ENCODE measurements at regions of chr11 and their contacts with region 1.

Region 1: DNA sequence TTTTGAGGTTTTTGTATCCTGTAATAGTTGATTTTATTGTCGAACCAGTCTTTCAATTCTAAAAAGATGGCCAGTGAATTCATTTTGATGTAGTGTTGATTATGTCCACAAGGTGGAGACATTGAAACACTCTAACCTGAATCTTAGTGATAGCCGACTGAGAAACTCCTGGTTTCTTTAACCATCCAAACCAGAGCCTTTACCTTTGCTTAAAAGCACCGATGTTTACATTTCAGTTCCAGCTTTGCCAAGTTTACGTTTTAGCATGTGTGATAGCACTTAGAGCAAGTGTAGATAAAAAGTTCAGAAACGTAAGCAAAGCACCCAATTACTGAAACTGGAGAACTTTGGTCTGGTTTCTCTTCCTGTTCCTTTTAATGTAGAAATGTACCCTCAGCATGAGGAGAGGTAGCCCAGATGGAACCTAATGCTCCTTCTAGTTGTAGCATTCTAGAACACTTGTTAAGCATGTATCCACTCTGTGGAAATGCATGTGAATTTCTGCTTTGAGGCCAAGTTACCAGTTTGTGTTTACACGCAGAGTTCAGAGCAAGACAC is 208.6 kb downstream of the DBX1 start:
- DNase-seq: no peak
- ATAC-seq: no peak
- H3K4me3 ChIP-seq: no peak overlapping the region
- H3K27ac ChIP-seq: no peak overlapping the region
- H3K4me1 ChIP-seq: peaks cover 6 to 11% of the 10 kb centered on the region in 2 donors
- H3K27me3 ChIP-seq: no peaks in the 10 kb centered on the region

Region 2: DNA sequence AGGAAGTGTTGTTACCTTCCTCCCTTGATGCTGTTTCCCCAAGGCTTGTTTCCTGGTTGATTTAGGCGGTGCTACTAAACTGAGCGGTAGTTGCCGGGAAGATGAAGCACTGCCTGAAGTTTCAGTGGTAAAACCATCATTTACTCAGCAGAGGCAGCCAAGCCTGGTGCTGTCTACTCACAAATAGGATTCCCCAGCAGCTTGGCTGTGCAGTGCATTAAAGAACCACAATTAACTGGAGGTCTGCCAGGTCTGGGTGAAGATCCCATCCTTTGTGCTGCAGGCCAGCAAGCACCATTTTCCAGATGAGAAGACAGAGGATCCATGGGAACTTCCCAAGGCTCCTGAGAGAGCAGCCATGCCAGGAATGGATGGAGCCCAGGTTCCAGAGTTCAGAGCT is 479.0 kb before region 1 on chr11:
- intact Hi-C with region 1: no loop called
- DNase-seq: no peak
- ATAC-seq: no peak
- H3K4me3 ChIP-seq: no peak overlapping the region
- H3K27ac ChIP-seq: no peak overlapping the region
- H3K4me1 ChIP-seq: no peaks in the 10 kb centered on the region
- H3K27me3 ChIP-seq: peaks cover 0 to 2% of the 10 kb centered on the region in 2 donors

Region 3: GRCh38 chr11:20355221-20356219 is 403.9 kb after region 1 on chr11:
- intact Hi-C with region 1: loop called in 1 of 2 experiments (anchors 10 kb)
- DNase-seq: no peak
- ATAC-seq: no peak
- H3K4me3 ChIP-seq: no peak overlapping the region
- H3K27ac ChIP-seq: no peak overlapping the region
- H3K4me1 ChIP-seq: peaks cover 0 to 1% of the 10 kb centered on the region in 2 donors
- H3K27me3 ChIP-seq: no peaks in the 10 kb centered on the region